ENCODE measurements at regions of chr5 and their contacts with region 1.

Region 1: DNA sequence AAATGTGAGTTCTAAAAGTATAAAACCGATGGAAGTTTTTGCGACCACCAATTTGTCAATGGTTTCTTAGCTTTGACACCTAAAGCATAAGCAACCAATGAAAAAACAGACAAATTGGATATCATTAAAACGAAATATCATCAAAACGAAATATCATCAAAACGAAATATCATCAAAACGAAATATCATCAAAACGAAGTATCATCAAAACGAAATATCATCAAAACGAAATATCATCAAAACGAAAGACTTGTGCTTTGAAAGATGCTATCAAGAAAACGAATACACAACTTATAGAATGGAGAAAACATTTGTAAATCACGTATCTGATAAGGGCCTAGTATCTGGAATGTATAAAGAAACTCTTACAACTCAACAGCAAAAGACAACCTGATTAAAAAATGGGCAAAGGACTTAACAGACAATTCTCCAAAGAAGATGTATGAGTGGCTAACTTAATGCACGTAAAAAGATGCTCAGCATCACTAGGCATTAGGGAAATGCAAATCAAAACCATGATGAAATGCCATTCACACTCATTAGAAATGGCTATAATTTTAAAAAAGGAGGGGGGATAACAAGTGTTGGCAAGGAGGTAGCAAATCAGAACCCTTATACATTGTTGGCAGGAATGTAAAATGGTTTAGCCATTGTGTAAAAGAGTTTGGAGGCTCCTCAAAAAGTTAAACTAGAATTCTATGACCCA is 29.4 kb upstream of the TBC1D9B start:
- DNase-seq: no peak
- H3K4me3 ChIP-seq: no peak overlapping the region
- H3K27ac ChIP-seq: no peak overlapping the region
- H3K4me1 ChIP-seq: no peaks in the 10 kb centered on the region
- H3K27me3 ChIP-seq: no peaks in the 10 kb centered on the region
- CTCF ChIP-seq: no peak

Region 2: DNA sequence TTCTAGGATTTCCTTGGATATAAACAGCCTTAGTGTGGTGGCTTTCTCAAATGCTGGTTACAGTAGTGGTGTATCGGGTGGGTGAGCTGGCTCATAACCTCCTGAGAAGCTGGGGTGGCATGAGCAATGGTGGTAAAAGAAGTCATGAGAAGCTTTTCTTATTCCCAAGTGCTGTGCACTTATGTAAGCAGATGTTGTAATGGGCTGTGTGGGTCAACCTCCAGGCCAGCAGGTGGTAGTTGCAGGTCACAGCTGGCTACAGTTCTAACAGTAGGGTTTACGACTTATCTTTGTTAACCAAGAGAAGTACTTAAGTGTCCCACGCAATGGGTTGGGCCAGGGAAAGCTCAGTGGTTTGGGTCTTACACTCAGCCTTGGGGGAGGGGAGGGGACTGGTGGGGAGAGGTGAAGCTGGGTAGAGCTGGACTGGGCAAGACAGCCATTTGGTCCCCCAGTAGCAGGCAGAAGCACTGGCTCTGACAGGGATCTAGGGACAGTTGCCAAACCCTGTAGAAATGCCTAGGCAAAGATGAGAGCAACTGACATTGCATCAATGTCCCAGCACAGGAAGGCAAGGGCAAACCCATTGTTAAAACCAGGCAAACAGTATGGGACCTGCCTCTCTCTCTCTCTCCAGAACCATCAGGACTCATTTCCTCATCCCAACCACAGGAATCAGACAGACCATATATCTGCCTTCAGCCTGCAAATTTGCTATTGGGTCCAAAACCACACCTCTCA is 57.6 kb after region 1 on chr5:
- CTCF ChIA-PET with region 1: no interaction called
- dilution Hi-C with region 1: loop called (anchors 5 kb)
- in situ Hi-C with region 1: no loop called
- intact Hi-C with region 1: no loop called
- DNase-seq: no peak
- H3K4me3 ChIP-seq: no peak overlapping the region
- H3K27ac ChIP-seq: no peak overlapping the region
- H3K4me1 ChIP-seq: no peaks in the 10 kb centered on the region
- H3K27me3 ChIP-seq: no peaks in the 10 kb centered on the region
- CTCF ChIP-seq: no peak